Heart right ventricle (tissue), 16 donors: ENCODE measurements at regions of chr1 and their contacts with region 1.

Region 1: GRCh38 chr1:165597883-165598675 is 33.0 kb upstream of the MGST3 start:
- DNase-seq: peak; percentile 96 to 97
- ATAC-seq: peak; percentile 99 to 100 (median 99)
- H3K4me3 ChIP-seq: peak overlapping the region; percentile 19 to 77 (median 63)
- H3K27ac ChIP-seq: peak overlapping the region in 9 of 10 donors; percentile 46 to 82 (median 65)
- H3K4me1 ChIP-seq: peaks cover 0 to 28% (median 6%) of the 10 kb centered on the region in 9 donors
- H3K27me3 ChIP-seq: peaks cover 0 to 43% (median 14%) of the 10 kb centered on the region in 7 donors
- CTCF ChIP-seq: no peak

Region 2: DNA sequence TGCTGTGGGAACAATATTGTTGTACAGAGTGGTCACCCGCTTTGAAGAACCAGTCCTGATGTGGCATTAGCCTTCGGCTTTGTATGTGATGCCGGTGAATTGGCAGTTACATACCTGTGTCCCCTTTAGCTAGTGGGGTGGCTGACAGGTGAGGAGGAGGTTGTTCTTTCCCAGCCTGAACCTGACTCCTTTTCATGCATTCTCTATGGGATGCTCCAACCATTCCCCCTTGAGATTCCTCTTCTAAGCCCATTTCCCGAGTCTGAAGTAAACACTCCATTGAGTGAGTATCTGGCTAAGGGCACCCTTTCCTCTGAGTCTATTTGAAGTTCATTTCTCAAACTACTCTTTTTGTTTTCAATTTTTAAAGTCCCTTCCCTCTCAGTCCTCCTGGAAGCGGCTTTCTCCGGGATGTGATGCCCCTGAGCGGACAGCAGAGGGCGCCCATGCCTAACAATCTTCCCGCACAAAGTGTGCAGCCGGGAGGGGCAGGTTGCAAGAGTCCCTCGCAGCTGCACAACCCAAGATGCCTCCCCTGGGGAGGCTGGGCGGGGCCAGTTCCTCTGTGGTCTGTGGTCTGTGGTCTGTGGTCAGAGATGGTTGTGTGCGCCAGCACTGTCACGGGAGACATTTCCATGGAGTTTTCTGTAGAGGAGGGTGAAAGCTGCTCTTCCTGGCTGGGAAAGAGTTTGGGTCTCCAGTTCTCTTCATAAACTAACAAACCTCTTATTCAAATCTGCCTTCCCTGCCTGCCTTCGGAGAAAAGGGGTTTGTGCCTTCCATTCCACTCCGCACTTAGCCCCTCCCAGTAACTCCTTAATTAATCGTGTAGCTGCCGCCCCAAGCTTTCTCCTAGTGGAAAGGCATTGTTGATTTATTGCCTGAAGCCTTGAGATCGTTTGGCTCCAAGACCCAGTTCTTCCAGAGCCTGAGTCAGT is 205.2 kb before region 1 on chr1:
- intact Hi-C with region 1: loop called in 6 of 10 experiments (anchors 1 to 5 kb)
- DNase-seq: peak; percentile 81 to 83
- ATAC-seq: peak; percentile 86 to 95 (median 93)
- H3K4me3 ChIP-seq: peak overlapping the region in 4 of 10 donors; percentile 16 to 32 (median 22)
- H3K27ac ChIP-seq: peak overlapping the region in 1 of 10 donors; percentile 26
- H3K4me1 ChIP-seq: peaks cover 0 to 23% (median 11%) of the 10 kb centered on the region in 9 donors
- H3K27me3 ChIP-seq: peaks cover 0 to 97% (median 0%) of the 10 kb centered on the region in 7 donors
- CTCF ChIP-seq: peak; percentile 86 to 98 (median 97)

Region 3: GRCh38 chr1:165403835-165404482 is 194.1 kb before region 1 on chr1:
- intact Hi-C with region 1: loop called in 8 of 10 experiments (anchors 1 to 5 kb)
- DNase-seq: peak in 1 of 2 donors; percentile 24
- ATAC-seq: peak; percentile 25 to 68 (median 57)
- H3K4me3 ChIP-seq: no peak overlapping the region
- H3K27ac ChIP-seq: no peak overlapping the region
- H3K4me1 ChIP-seq: peaks cover 0 to 12% (median 0%) of the 10 kb centered on the region in 9 donors
- H3K27me3 ChIP-seq: peaks cover 0 to 52% (median 0%) of the 10 kb centered on the region in 7 donors
- CTCF ChIP-seq: peak; percentile 44 to 75 (median 71)

Region 4: GRCh38 chr1:165610885-165611284 is 12.8 kb after region 1 on chr1:
- intact Hi-C with region 1: no loop called
- DNase-seq: no peak
- ATAC-seq: no peak
- H3K4me3 ChIP-seq: no peak overlapping the region
- H3K27ac ChIP-seq: no peak overlapping the region
- H3K4me1 ChIP-seq: no peaks in the 10 kb centered on the region
- H3K27me3 ChIP-seq: peaks cover 0 to 21% (median 16%) of the 10 kb centered on the region in 7 donors
- CTCF ChIP-seq: no peak

Region 5: GRCh38 chr1:165630629-165631341 is 32.7 kb after region 1 on chr1 and contains the start of gene MGST3:
- intact Hi-C with region 1: loop called in 1 of 10 experiments (anchors 2 kb)
- DNase-seq: peak; percentile 94 to 97
- ATAC-seq: peak; percentile 97 to 99 (median 98)
- H3K4me3 ChIP-seq: peak within 1 kb of the TSS; percentile 66 to 96 (median 81)
- H3K27ac ChIP-seq: peak within 1 kb of the TSS; percentile 87 to 97 (median 92)
- H3K4me1 ChIP-seq: peaks cover 0 to 47% (median 35%) of the 10 kb centered on the region in 9 donors
- H3K27me3 ChIP-seq: no peaks in the 10 kb centered on the region
- CTCF ChIP-seq: no peak
- total RNA-seq, gene MGST3: 545 to 1,002 (median 844) TPM

Region 6: GRCh38 chr1:165697881-165698760 is 100.0 kb after region 1 on chr1 and contains the start of gene ALDH9A1:
- intact Hi-C with region 1: loop called in 3 of 10 experiments (anchors 1 to 10 kb)
- DNase-seq: peak; percentile 90 to 92
- ATAC-seq: peak; percentile 97 to 99 (median 97)
- H3K4me3 ChIP-seq: peak within 1 kb of the TSS; percentile 39 to 92 (median 81)
- H3K27ac ChIP-seq: peak within 1 kb of the TSS; percentile 92 to 99 (median 95)
- H3K4me1 ChIP-seq: peaks cover 4 to 39% (median 22%) of the 10 kb centered on the region in 9 donors
- H3K27me3 ChIP-seq: no peaks in the 10 kb centered on the region
- CTCF ChIP-seq: peak in 7 of 9 donors; percentile 17 to 59 (median 42)
- total RNA-seq, gene ALDH9A1: 47.3 to 75.3 (median 66.2) TPM

Region 7: DNA sequence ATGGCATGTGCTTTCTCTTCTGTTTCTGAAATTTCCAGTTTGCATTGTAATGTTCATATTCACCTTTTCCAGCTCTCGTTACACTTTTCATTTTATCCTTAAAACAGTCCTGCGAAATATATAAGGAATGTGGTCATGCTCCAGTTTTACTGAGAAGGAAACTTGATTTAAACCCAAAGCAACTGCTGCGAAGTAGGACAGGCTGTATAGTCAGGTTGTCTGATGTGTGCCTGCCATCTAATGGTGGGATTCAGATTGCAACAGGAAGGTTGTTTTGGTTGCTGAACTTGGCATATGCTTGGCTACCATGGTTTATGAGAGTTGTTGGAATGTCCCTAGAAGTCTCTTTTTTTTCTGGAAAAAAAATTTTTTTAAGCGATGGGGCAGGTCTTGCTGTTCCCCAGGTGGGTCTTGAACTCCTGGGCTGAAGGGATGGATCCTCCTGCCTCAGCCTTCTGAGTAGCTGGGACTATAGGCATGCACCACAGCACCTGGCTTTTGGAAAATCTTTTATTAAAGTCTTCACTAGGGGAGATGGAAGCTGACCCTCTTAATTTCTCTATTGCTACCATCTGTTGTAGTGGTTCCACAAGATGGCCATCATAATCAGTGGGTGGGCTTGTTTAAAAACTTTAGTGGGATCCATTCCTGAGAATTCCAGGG is 316.2 kb after region 1 on chr1:
- intact Hi-C with region 1: loop called in 9 of 10 experiments (anchors 1 to 5 kb)
- DNase-seq: peak in 1 of 2 donors; percentile 63
- ATAC-seq: peak in 7 of 8 donors; percentile 65 to 81 (median 78)
- H3K4me3 ChIP-seq: no peak overlapping the region
- H3K27ac ChIP-seq: no peak overlapping the region
- H3K4me1 ChIP-seq: peaks cover 0 to 26% (median 16%) of the 10 kb centered on the region in 9 donors
- H3K27me3 ChIP-seq: no peaks in the 10 kb centered on the region
- CTCF ChIP-seq: peak; percentile 67 to 93 (median 85)